GM13976 (cell line): ENCODE measurements at regions of chr15 and their contacts with region 1.

Region 1: DNA sequence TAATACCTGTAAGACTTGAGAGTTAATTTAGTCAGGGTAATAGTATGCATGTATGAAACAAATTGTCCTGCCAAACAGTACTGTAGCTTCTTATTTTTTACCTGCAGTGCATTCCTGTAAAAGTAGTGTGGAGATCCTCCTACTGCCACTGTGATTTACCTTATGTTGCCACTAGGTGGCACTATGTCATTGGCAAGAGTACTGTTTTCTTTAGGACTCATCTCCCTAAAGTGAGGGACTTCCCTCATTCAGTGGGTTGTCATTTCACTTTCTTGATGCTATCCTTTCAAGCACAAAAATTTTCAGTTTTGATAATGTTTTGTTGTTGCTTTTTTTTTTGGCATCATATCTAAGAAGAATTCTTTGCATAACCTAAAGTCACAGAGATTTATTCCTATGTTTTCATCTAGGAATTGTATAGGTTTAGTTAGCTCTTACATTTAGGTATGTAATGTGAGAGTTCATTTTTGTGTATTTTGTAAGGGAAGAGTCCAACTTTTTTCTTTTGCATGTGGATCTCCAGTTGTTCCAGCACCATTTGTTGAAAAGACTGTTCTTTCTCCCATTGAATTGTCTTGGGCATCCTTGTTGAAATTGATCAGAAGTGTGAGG is 105.7 kb downstream of the AKAP13 start:
- DNase-seq: peak; percentile 77
- CTCF ChIP-seq: peak; percentile 63

Region 2: DNA sequence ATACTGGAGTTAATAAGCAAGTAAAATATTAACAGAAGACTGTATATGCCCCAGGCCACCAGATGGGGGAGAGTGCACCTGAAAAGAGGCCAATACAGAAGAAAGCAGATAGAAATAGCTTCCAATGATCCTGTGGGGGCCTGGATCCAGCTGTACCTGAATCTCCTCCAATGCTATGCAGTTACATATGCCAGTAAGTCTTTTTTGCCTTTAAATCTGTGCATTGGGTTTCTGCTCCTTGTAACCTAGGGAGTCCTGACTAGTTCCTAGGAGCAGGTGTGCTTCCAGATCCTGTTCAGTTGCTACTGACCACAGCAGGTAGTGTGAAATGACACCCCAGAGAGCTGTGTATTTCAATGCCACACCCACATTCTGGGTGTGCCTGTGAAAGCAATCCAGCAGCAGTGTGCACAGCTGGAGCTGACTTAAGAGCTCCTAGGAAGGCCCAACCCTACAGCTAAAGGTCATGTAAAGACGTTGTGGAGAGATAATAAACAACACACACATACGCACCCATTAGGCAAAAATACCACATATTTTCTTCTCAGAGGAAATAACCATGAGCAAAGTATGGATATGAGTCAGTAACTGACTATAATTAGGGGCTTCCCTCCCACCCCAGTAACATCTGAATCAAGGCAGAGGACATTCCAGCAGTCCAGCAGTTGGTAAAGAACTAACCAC is 167.9 kb before region 1 on chr15:
- in situ Hi-C with region 1: loop called (anchors 25 kb)
- DNase-seq: peak; percentile 71
- CTCF ChIP-seq: peak; percentile 4

Region 3: GRCh38 chr15:85689729-85690128 is 203.7 kb after region 1 on chr15:
- in situ Hi-C with region 1: loop called (anchors 10 kb)
- DNase-seq: peak; percentile 38
- CTCF ChIP-seq: no peak

Region 4: DNA sequence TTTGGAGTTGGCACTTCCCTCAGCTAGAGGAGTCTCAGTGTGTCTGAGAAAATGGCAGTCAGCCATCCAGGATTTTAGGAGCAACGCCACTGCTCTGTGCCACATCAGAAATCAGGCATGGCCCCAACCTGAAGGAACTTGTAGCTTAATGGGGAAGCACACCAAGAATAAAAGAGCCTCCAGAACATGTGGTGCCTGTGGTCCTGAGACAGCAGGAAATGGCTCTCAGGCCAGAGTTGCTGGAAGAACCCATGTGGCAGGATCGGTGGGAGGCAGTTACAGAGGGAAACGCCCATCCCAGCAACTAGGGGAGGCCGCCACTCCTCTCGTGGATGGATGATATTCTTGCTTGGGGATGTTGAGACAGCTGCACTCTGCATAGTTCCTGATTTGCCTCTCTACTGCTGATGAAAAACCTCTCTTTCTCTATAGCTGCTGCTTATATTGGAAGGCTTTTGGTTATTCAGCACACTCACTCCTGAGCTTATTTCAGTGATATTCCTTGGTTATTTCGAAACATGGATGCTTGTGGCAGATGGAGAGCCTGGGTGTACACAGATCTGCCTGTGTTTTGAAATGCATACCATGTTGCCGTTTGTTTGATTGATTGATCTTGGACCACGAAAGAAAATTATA is 256.2 kb after region 1 on chr15:
- in situ Hi-C with region 1: no loop called
- DNase-seq: no peak
- CTCF ChIP-seq: no peak